ENCODE measurements at regions of chr2 and their contacts with region 1.

Region 1: DNA sequence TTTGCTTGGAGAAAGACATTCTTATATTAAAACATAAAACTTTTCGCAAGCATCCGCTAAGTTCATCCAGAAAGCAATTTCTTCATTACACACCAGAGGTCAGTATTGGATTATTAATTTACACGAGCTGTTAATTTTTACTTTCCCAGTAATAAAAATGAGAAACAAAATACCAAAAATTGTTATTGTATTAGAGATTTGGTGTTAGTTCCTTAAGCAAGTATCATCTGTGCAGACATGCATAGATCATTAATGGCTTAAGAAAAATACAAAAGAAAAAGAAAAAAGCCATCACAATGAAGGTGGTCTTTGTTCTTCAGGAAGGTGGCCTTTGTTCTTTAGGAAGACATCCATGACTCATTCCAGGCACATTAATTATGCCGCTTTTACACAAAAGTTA is 53.6 kb upstream of the HNMT start:
- DNase-seq: no peak
- ATAC-seq: no peak
- H3K4me3 ChIP-seq: no peak overlapping the region
- H3K27ac ChIP-seq: no peak overlapping the region
- H3K4me1 ChIP-seq: no peaks in the 10 kb centered on the region
- H3K27me3 ChIP-seq: no peaks in the 10 kb centered on the region
- CTCF ChIP-seq: peak; percentile 45 to 75 (median 67)
- POLR2A ChIP-seq: no peak

Region 2: DNA sequence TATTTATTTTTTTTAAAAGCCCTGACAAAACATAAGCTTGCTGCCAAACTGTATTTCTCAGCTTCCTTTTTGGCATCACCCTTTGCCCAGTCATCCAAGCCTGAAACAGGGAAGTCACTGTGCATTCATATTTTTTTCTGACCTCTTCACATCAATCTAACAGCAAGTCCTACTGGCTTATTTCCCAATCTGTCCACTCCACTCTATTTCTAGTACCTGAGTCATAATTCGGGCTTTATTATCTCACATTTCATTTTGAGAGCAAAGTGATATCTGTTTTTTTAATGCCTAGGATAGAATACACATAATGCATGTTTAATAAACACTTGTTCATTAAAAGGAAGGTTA is 58.8 kb after region 1 on chr2:
- intact Hi-C with region 1: no loop called
- DNase-seq: peak in 2 of 5 donors; percentile 39 to 43
- ATAC-seq: peak; percentile 81 to 93 (median 90)
- H3K4me3 ChIP-seq: no peak overlapping the region
- H3K27ac ChIP-seq: peak overlapping the region in 8 of 12 donors; percentile 20 to 94 (median 44)
- H3K4me1 ChIP-seq: peaks cover 0 to 38% (median 7%) of the 10 kb centered on the region in 12 donors
- H3K27me3 ChIP-seq: no peaks in the 10 kb centered on the region
- CTCF ChIP-seq: no peak
- POLR2A ChIP-seq: no peak

Region 3: DNA sequence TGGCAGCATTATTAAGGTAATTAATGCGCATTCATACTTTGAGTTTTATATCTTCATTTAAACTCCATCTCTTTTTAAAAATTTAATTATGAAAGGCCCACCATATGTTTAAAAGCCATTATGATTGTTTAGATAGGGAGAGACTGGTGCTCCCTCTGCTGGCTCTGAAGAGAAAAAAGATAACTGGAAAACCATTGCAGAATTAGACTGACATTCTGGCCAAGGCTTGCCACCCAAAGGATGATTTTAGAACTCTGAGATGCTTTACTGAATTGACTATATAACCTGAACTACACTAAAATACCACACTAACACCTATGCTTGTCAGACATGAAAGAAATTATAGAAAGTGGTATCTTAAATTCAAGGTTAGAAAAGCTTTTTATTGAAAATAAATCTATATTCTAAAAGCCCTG is 463.4 kb after region 1 on chr2:
- intact Hi-C with region 1: loop called in 2 of 10 experiments (anchors 5 to 10 kb)
- DNase-seq: no peak
- ATAC-seq: no peak
- H3K4me3 ChIP-seq: no peak overlapping the region
- H3K27ac ChIP-seq: no peak overlapping the region
- H3K4me1 ChIP-seq: no peaks in the 10 kb centered on the region
- H3K27me3 ChIP-seq: no peaks in the 10 kb centered on the region
- CTCF ChIP-seq: peak; percentile 37 to 74 (median 61)
- POLR2A ChIP-seq: no peak

Region 4: DNA sequence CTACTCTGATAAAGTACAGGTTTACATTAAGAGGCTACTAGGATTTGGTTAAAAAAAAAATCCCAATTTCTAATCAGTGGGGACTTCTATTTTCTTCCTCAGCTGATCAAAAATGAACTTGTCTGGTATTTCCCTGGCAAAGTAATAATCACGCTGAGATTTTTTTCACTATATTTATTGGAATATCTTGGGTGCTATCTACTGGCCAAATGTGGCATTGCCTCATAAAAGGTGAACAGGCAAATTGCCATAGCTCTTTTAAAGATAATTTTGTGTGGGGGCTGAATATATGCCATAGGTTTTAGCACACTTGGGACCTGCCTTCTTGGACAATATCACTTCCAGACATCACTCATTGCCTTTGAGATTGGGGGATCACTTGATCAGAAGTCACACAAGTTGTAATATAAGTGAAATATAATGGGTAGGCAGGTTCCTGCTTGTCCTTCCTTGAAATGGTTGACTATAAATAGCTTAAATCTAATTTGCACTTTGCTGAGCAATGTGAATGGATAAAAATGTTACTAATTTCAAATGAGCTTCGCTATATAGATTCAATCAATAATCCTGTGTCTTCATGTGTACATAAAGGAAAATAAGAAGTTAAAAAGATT is 876.5 kb after region 1 on chr2:
- intact Hi-C with region 1: loop called in 9 of 10 experiments (anchors 2 to 10 kb)
- DNase-seq: no peak
- ATAC-seq: no peak
- H3K4me3 ChIP-seq: no peak overlapping the region
- H3K27ac ChIP-seq: no peak overlapping the region
- H3K4me1 ChIP-seq: no peaks in the 10 kb centered on the region
- H3K27me3 ChIP-seq: peaks cover 0 to 8% (median 0%) of the 10 kb centered on the region in 9 donors
- CTCF ChIP-seq: peak; percentile 48 to 78 (median 70)
- POLR2A ChIP-seq: no peak

Region 5: DNA sequence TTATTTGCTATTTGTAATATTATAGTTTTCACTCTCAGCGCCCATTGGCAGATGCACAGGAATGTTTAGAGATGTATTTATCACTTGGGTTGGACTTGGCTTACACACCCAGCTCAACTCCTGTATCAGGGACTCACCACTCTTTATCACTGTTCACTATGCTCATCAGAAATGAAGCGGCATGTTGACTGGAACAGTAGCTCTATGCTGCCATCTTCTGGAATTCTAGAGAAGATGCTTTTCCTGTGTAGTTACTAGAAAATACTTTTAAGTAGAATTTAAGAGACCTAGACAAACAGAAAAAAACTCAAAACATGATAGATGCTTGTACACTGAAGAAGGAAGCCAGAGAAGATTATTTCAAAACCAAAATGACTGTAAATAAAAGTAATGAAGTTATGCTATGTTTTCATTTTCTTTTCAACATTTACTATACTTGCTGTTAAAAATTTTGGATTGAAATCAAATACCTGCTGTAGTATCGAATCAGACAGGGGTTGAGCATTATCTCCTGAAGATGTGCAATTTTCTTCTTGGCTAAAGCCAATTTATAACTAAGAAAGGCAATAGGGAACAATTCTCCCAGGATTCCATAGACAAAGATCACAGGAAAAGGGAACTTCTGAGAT is 916.9 kb after region 1 on chr2:
- intact Hi-C with region 1: loop called (anchors 1 to 5 kb)
- DNase-seq: no peak
- ATAC-seq: peak in 3 of 4 donors; percentile 47 to 72 (median 59)
- H3K4me3 ChIP-seq: no peak overlapping the region
- H3K27ac ChIP-seq: no peak overlapping the region
- H3K4me1 ChIP-seq: no peaks in the 10 kb centered on the region
- H3K27me3 ChIP-seq: peaks cover 0 to 5% (median 0%) of the 10 kb centered on the region in 9 donors
- CTCF ChIP-seq: peak; percentile 55 to 81 (median 74)
- POLR2A ChIP-seq: no peak